ENCODE measurements at regions of chr6 and their contacts with region 1.

Region 1: GRCh38 chr6:10800829-10801535 is 37.4 kb downstream of the MAK start:
- DNase-seq: peak; percentile 26 to 77 (median 61)
- ATAC-seq: peak; percentile 81
- H3K4me3 ChIP-seq: no peak overlapping the region
- H3K4me3 Mint-ChIP-seq: no peak overlapping the region
- H3K27ac ChIP-seq: no peak overlapping the region
- H3K27ac Mint-ChIP-seq: no peak overlapping the region
- H3K4me1 ChIP-seq: no peaks in the 10 kb centered on the region
- H3K4me1 Mint-ChIP-seq: no peaks in the 10 kb centered on the region
- H3K27me3 ChIP-seq: no peaks in the 10 kb centered on the region
- H3K27me3 Mint-ChIP-seq: no peaks in the 10 kb centered on the region
- CTCF ChIP-seq: peak; percentile 96

Region 2: GRCh38 chr6:8983188-8983688 is 1817.7 kb before region 1 on chr6:
- CTCF ChIA-PET with region 1: no interaction called
- POLR2A ChIA-PET with region 1: no interaction called
- intact Hi-C with region 1: loop called in 1 of 2 experiments (anchors 1 kb)
- DNase-seq: peak in 8 of 9 experiments; percentile 20 to 64 (median 38)
- ATAC-seq: peak; percentile 56
- H3K4me3 ChIP-seq: no peak overlapping the region
- H3K4me3 Mint-ChIP-seq: no peak overlapping the region
- H3K27ac ChIP-seq: no peak overlapping the region
- H3K27ac Mint-ChIP-seq: no peak overlapping the region
- H3K4me1 ChIP-seq: no peaks in the 10 kb centered on the region
- H3K4me1 Mint-ChIP-seq: no peaks in the 10 kb centered on the region
- H3K27me3 ChIP-seq: no peaks in the 10 kb centered on the region
- H3K27me3 Mint-ChIP-seq: peaks cover 11% of the 10 kb centered on the region
- CTCF ChIP-seq: peak; percentile 99

Region 3: DNA sequence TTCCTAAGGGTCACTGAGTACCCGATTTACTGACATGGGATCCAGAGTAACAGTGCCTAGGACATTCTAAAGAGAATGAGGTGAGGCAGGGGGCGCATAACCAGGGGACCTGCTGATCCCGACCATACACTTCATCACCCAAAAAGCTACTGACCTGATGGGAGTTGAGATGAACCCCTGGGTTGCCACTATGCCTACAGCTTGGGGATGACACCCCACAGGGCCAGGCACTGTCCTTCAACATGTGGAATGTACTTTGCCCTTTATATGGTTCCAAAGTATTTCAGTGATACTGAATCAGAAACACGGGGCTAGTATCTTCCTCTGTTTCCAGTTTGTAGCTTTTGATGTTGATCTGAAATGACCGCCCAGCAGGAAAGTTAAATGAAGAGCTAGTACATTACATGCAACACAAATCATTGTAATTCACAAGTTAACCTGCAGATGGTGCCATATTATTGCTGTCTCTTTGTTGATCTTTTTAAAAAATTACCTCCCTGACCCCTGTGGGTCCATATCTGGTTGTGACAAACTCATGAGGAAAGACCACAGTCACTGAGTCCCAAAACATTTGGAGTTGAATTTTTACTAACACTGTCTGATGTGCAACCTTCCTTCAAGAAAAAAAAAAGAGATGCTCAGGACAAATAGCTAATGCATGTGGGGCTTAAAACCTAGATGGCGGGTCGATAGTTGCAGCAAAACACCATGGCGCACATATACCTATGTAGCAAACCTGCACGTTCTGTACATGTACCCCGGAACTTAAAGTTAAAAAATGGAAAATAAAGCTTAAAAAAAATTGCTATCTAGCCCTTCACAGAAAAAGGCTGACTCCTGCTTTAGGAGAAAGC is 322.6 kb before region 1 on chr6:
- CTCF ChIA-PET with region 1: interaction called, 45 read pairs
- POLR2A ChIA-PET with region 1: interaction called, 4 read pairs
- intact Hi-C with region 1: loop called in 1 of 2 experiments (anchors 1 kb)
- DNase-seq: peak in 2 of 9 experiments; percentile 38 to 52
- ATAC-seq: peak; percentile 31
- H3K4me3 ChIP-seq: no peak overlapping the region
- H3K4me3 Mint-ChIP-seq: no peak overlapping the region
- H3K27ac ChIP-seq: no peak overlapping the region
- H3K27ac Mint-ChIP-seq: no peak overlapping the region
- H3K4me1 ChIP-seq: no peaks in the 10 kb centered on the region
- H3K4me1 Mint-ChIP-seq: no peaks in the 10 kb centered on the region
- H3K27me3 ChIP-seq: no peaks in the 10 kb centered on the region
- H3K27me3 Mint-ChIP-seq: peaks cover 14% of the 10 kb centered on the region
- CTCF ChIP-seq: peak; percentile 62

Region 4: GRCh38 chr6:10505529-10505928 is 295.5 kb before region 1 on chr6:
- CTCF ChIA-PET with region 1: interaction called, 28 read pairs
- POLR2A ChIA-PET with region 1: no interaction called
- intact Hi-C with region 1: loop called (anchors 1 kb)
- DNase-seq: no peak
- ATAC-seq: no peak
- H3K4me3 ChIP-seq: no peak overlapping the region
- H3K4me3 Mint-ChIP-seq: no peak overlapping the region
- H3K27ac ChIP-seq: no peak overlapping the region
- H3K27ac Mint-ChIP-seq: no peak overlapping the region
- H3K4me1 ChIP-seq: no peaks in the 10 kb centered on the region
- H3K4me1 Mint-ChIP-seq: peaks cover under 1% of the 10 kb centered on the region
- H3K27me3 ChIP-seq: peaks cover 0 to 4% of the 10 kb centered on the region in 2 experiments
- H3K27me3 Mint-ChIP-seq: peaks cover 7% of the 10 kb centered on the region
- CTCF ChIP-seq: no peak

Region 5: DNA sequence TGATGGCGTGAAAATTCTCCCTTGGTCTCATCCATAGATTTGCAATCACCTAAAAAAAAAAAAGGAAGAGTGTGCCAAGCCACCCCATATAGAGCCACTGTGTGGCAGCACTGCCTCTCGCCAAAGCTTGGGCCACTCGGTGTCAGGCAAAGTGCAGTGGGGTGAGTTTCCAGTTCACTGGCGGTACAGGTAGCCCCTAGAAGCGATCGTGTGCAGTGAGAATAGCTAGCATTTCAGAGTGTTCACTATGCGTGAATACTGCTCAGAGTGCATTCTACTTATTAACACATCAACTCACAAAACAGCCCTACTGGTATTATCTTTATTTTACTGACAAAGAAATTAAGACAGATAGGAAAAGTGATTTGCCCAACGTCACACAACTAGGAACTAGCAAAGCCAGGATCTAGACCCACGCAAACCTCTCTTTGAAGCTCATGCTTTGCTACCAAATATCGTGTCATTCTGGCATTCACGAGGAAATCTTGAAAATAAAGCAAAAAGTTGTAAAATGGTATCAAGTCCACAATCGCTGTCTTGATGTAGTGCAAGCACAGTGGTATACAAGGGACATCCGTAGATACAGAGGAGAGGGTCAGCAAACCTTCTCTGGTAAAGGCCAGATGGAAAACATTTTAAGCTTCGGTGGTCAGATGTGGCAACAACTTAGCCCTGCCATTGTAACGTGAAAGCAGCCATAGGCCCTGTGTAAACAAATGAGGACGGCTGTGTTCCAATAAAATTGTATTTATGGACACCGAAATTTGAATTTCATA is 290.2 kb before region 1 on chr6:
- CTCF ChIA-PET with region 1: interaction called, 28 read pairs
- POLR2A ChIA-PET with region 1: no interaction called
- intact Hi-C with region 1: loop called (anchors 1 kb)
- DNase-seq: peak in 7 of 9 experiments; percentile 20 to 64 (median 37)
- ATAC-seq: peak; percentile 66
- H3K4me3 ChIP-seq: no peak overlapping the region
- H3K4me3 Mint-ChIP-seq: no peak overlapping the region
- H3K27ac ChIP-seq: no peak overlapping the region
- H3K27ac Mint-ChIP-seq: no peak overlapping the region
- H3K4me1 ChIP-seq: no peaks in the 10 kb centered on the region
- H3K4me1 Mint-ChIP-seq: peaks cover 4% of the 10 kb centered on the region
- H3K27me3 ChIP-seq: peaks cover 0 to 4% of the 10 kb centered on the region in 2 experiments
- H3K27me3 Mint-ChIP-seq: no peaks in the 10 kb centered on the region
- CTCF ChIP-seq: peak; percentile 54

Region 6: DNA sequence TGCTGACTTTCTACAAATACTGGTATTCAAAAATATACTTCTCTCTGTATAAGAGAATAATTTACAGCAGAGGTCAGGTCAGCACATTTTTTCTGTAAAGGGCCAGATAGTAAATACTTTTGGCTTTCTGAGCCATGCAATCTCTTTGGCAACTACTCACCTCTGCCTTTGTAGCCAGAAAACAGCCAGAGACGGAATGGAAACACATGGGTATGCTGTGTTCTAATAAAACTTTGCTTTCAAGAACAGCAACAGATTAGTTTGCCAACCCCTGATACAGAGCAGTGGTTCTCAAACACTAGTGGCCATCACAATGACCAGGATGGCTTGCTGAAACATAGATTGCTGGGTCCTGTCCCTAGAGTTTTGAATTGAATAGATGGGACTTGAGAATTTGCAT is 132.1 kb after region 1 on chr6:
- CTCF ChIA-PET with region 1: no interaction called
- POLR2A ChIA-PET with region 1: no interaction called
- intact Hi-C with region 1: no loop called
- DNase-seq: no peak
- ATAC-seq: no peak
- H3K4me3 ChIP-seq: no peak overlapping the region
- H3K4me3 Mint-ChIP-seq: no peak overlapping the region
- H3K27ac ChIP-seq: no peak overlapping the region
- H3K27ac Mint-ChIP-seq: no peak overlapping the region
- H3K4me1 ChIP-seq: no peaks in the 10 kb centered on the region
- H3K4me1 Mint-ChIP-seq: no peaks in the 10 kb centered on the region
- H3K27me3 ChIP-seq: peaks cover 6 to 7% of the 10 kb centered on the region in 2 experiments
- H3K27me3 Mint-ChIP-seq: peaks cover 9% of the 10 kb centered on the region
- CTCF ChIP-seq: no peak

Region 7: GRCh38 chr6:12033770-12034169 is 1232.8 kb after region 1 on chr6:
- CTCF ChIA-PET with region 1: no interaction called
- POLR2A ChIA-PET with region 1: no interaction called
- intact Hi-C with region 1: no loop called
- DNase-seq: no peak
- ATAC-seq: no peak
- H3K4me3 ChIP-seq: no peak overlapping the region
- H3K4me3 Mint-ChIP-seq: no peak overlapping the region
- H3K27ac ChIP-seq: no peak overlapping the region
- H3K27ac Mint-ChIP-seq: no peak overlapping the region
- H3K4me1 ChIP-seq: peaks cover 25% of the 10 kb centered on the region
- H3K4me1 Mint-ChIP-seq: peaks cover 57% of the 10 kb centered on the region
- H3K27me3 ChIP-seq: no peaks in the 10 kb centered on the region
- H3K27me3 Mint-ChIP-seq: no peaks in the 10 kb centered on the region
- CTCF ChIP-seq: no peak